Spleen (tissue), 13 donors: ENCODE measurements at regions of chr19 and their contacts with region 1.

Region 1: DNA sequence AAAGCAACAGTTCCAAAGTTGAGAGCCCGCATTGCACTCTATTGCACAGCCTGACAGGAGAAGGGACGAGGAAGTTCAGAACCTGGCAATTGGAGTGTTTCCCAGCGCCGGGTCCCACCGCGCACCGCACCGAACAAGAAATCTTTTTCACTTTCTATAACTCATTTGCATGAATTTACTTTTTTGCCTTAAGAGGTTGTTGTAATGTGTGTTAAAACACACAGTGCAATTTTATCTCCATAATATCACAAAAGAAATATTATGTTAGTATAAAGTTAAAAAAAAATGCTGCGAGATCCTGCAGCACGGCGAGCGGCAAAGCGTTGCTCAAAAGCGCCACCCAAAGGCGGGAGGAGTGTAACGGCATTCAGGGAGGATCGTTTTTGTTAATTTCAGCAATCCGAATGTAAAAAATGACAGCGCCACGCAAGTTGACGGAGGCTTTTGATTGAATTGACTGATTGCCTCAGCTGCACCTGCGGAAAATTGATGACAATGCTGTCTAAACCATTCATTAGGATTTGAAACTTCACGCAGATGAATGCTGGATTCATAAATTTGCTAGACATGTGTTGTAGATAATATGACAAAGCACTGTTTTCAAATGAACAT is 303.6 kb upstream of the ZNF507 start:
- DNase-seq: no peak
- H3K4me3 ChIP-seq: peak overlapping the region in 5 of 8 donors; percentile 12 to 58 (median 28)
- H3K27ac ChIP-seq: no peak overlapping the region
- H3K4me1 ChIP-seq: peaks cover 0 to 8% (median 0%) of the 10 kb centered on the region in 6 donors
- H3K27me3 ChIP-seq: peaks cover 0 to 50% (median 7%) of the 10 kb centered on the region in 7 donors
- CTCF ChIP-seq: peak in 10 of 11 experiments; percentile 10 to 66 (median 56)
- POLR2A ChIP-seq: no peak

Region 2: DNA sequence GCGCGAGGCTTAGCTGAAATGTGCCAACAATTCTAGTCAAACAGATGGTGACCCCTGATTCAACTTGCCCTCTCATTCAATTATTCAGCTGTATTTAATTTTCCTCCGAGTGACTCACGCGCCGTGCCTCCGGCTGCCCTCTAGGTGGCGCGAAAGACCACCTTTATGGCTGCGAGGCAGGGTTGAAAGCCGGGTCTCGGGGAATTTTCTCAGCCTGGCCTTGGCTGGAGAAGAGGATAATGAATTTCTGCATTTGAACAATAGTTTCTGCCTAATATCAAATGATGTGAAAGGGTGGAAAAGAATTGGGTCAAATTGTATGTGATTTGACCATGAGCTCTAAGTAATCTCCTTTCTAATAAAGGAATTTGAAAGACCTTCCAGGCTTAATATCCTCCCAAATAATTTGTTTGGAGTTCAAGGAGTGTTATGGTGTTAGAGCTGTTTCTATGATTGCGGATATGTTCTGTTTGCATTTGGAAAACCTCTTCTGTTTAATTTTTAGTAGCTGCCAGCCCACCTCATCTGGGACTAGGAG is 1358.7 kb before region 1 on chr19:
- intact Hi-C with region 1: loop called (anchors 5 kb)
- DNase-seq: peak; percentile 82
- H3K4me3 ChIP-seq: no peak overlapping the region
- H3K27ac ChIP-seq: no peak overlapping the region
- H3K4me1 ChIP-seq: peaks cover 0 to 13% (median 3%) of the 10 kb centered on the region in 6 donors
- H3K27me3 ChIP-seq: peaks cover 0 to 68% (median 8%) of the 10 kb centered on the region in 7 donors
- CTCF ChIP-seq: peak; percentile 64 to 87 (median 83)
- POLR2A ChIP-seq: no peak

Region 3: DNA sequence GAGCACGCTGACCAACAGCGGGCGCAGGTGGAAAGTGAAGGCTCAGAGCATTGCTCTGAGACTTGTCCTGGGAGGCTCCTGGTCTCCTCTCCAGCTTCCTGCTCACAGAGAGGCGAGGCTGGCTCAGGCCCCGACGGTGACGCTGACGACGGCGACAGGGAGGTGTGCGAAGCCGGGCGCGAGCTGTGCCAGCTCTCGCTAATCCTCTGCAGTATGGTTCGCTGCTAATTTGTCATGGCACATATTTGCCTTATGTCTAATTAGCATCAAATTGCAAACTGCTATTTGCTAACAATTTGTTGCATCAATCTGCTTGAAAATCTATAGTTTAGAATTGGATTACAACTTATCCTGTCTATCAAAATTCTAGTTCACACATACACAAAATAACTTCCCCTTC is 166.2 kb before region 1 on chr19:
- intact Hi-C with region 1: no loop called
- DNase-seq: no peak
- H3K4me3 ChIP-seq: no peak overlapping the region
- H3K27ac ChIP-seq: no peak overlapping the region
- H3K4me1 ChIP-seq: no peaks in the 10 kb centered on the region
- H3K27me3 ChIP-seq: no peaks in the 10 kb centered on the region
- CTCF ChIP-seq: no peak
- POLR2A ChIP-seq: no peak

Region 4: DNA sequence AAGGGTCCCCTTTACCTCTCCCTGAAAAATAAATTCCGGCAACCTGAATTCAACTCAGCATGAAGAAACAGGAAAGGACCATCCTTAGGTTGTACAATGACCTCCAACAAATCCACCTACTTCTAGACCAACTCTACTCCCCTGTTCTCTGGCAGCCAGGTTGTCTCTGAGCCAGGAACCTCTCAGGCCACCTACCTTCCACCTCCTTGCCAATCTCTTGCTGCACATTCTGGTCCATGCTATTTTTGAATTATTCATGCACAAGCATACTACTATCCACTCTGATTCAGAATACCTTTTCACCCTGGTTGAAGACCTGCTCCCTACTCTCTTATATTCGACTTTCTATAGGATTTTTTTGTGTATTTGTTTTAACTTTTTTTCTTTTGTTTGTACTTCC is 111.4 kb before region 1 on chr19:
- intact Hi-C with region 1: no loop called
- DNase-seq: no peak
- H3K4me3 ChIP-seq: no peak overlapping the region
- H3K27ac ChIP-seq: no peak overlapping the region
- H3K4me1 ChIP-seq: no peaks in the 10 kb centered on the region
- H3K27me3 ChIP-seq: no peaks in the 10 kb centered on the region
- CTCF ChIP-seq: no peak
- POLR2A ChIP-seq: no peak

Region 5: DNA sequence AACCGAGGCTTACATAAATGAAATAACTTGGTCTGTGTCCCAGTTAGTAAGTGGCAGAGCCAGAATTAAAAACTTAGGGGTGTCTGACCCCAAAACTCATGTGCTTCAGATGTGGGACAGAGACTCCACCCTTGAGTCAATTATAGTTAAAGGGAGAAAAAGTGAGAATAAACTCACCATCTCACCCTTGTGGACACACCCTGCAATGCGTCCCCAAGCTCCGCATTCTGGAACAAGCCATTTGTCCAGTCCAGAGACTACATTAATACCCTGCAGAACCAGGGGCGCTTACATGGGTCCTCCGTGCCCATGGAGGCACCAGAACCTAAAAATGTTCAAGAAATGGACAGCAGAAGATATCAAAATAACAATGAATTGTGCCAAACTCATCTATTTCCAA is 96.6 kb after region 1 on chr19:
- intact Hi-C with region 1: no loop called
- DNase-seq: no peak
- H3K4me3 ChIP-seq: no peak overlapping the region
- H3K27ac ChIP-seq: no peak overlapping the region
- H3K4me1 ChIP-seq: no peaks in the 10 kb centered on the region
- H3K27me3 ChIP-seq: no peaks in the 10 kb centered on the region
- CTCF ChIP-seq: peak in 3 of 11 experiments; percentile 6 to 10 (median 7)
- POLR2A ChIP-seq: no peak

Region 6: GRCh38 chr19:32269831-32270230 is 228.0 kb after region 1 on chr19:
- intact Hi-C with region 1: no loop called
- DNase-seq: no peak
- H3K4me3 ChIP-seq: no peak overlapping the region
- H3K27ac ChIP-seq: no peak overlapping the region
- H3K4me1 ChIP-seq: no peaks in the 10 kb centered on the region
- H3K27me3 ChIP-seq: peaks cover 0 to 35% (median 0%) of the 10 kb centered on the region in 7 donors
- CTCF ChIP-seq: no peak
- POLR2A ChIP-seq: no peak